ENCODE measurements at regions of chr15 and their contacts with region 1.

Region 1: GRCh38 chr15:57561041-57561711 is 30.5 kb upstream of the MYZAP start:
- DNase-seq: peak; percentile 66 to 80
- H3K4me3 ChIP-seq: no peak overlapping the region
- H3K27ac ChIP-seq: peak overlapping the region; percentile 55 to 56
- H3K4me1 ChIP-seq: no peaks in the 10 kb centered on the region
- H3K27me3 ChIP-seq: no peaks in the 10 kb centered on the region
- CTCF ChIP-seq: peak; percentile 89 to 96 (median 91)
- POLR2A ChIP-seq: no peak

Region 2: GRCh38 chr15:57505949-57506391 is 55.2 kb before region 1 on chr15:
- intact Hi-C with region 1: no loop called
- DNase-seq: peak in 1 of 2 donors; percentile 44
- H3K4me3 ChIP-seq: no peak overlapping the region
- H3K27ac ChIP-seq: peak overlapping the region; percentile 43 to 62
- H3K4me1 ChIP-seq: no peaks in the 10 kb centered on the region
- H3K27me3 ChIP-seq: no peaks in the 10 kb centered on the region
- CTCF ChIP-seq: no peak
- POLR2A ChIP-seq: no peak

Region 3: GRCh38 chr15:57611938-57612337 is 50.8 kb after region 1 on chr15:
- intact Hi-C with region 1: loop called (anchors 5 kb)
- DNase-seq: peak; percentile 39 to 57
- H3K4me3 ChIP-seq: no peak overlapping the region
- H3K27ac ChIP-seq: peak overlapping the region; percentile 87
- H3K4me1 ChIP-seq: peaks cover 3 to 5% of the 10 kb centered on the region in 2 donors
- H3K27me3 ChIP-seq: no peaks in the 10 kb centered on the region
- CTCF ChIP-seq: peak; percentile 52 to 55 (median 53)
- POLR2A ChIP-seq: no peak

Region 4: GRCh38 chr15:57743424-57743823 is 182.2 kb after region 1 on chr15:
- intact Hi-C with region 1: loop called (anchors 5 kb)
- DNase-seq: no peak
- H3K4me3 ChIP-seq: no peak overlapping the region
- H3K27ac ChIP-seq: peak overlapping the region in 1 of 2 donors; percentile 47
- H3K4me1 ChIP-seq: peaks cover 6 to 12% of the 10 kb centered on the region in 2 donors
- H3K27me3 ChIP-seq: no peaks in the 10 kb centered on the region
- CTCF ChIP-seq: no peak
- POLR2A ChIP-seq: no peak

Measured in uterus (tissue), 4 donors.